Heart left ventricle (tissue), 16 donors: ENCODE measurements at regions of chr11 and their contacts with region 1.

Region 1: DNA sequence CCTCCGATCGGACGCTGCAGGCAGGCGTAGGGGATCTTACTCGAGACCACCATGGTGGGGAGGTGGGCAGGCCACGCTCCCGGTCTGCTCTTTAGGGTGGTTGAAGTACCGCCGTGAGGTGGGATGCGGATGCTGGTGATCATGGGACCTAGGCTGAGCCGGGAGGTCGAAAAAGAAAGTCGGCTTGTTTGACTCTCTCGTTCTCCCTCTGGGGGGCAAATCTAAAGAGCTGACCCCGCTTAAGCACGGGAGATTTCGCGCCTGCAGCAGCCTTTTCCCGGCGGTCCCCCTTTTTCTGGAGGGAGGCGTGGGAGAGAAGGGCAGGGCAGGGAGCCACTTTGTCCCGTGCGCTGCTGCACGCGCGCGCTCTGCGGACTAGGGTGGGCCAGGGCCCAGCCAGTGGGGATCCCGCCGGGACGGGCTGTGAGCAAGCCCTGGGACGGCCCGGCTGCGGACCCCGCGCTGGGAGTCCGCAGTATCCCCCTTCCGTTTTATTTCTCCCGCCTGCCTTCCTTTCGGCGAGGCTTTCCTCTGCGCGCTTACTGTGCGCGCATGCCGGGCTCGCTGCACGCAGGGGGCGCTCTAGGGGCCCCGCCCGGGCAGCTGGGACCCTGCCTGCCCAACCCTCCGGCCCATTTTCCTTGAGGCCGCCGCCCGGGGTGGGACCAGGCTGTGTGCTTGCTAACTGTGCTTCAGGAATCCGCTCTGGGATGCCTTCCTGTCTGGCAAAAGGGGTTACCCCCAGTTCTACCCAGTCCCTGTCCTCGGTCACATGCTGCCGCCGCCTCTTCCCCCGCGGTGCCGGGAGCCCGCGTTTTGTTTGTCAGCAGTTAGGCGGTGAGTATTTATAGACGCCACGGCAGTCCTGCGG is 81.0 kb downstream of the PRR5L start:
- DNase-seq: peak; percentile 51 to 81 (median 64)
- ATAC-seq: peak; percentile 45 to 90 (median 86)
- H3K4me3 ChIP-seq: peak overlapping the region; percentile 52 to 86 (median 72)
- H3K27ac ChIP-seq: peak overlapping the region in 10 of 12 donors; percentile 10 to 92 (median 42)
- H3K4me1 ChIP-seq: peaks cover 0 to 36% (median 11%) of the 10 kb centered on the region in 12 donors
- H3K27me3 ChIP-seq: peaks cover 0 to 10% (median 4%) of the 10 kb centered on the region in 9 donors
- CTCF ChIP-seq: peak; percentile 42 to 76 (median 64)
- POLR2A ChIP-seq: no peak

Region 2: DNA sequence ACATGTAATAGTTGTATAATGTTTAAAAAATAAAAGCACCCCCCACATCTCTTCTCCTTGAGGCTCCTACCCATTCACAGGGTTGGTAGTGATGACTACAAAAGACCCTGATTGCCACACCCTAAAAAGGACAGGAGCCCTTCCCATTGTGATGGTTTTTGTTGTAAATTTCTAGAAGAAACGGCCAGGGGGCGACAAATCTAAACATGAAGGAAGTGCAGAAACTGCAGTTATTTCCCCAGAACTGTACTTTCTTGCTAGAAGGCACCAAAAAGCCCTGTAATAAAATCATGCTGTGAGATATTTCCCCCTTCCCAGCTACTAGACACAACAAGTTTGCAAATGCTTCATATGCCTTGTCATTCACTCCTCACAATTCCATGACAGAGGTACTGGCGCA is 70.2 kb before region 1 on chr11:
- intact Hi-C with region 1: loop called in 1 of 10 experiments (anchors 10 kb)
- DNase-seq: no peak
- ATAC-seq: no peak
- H3K4me3 ChIP-seq: no peak overlapping the region
- H3K27ac ChIP-seq: no peak overlapping the region
- H3K4me1 ChIP-seq: peaks cover 0 to 20% (median 0%) of the 10 kb centered on the region in 12 donors
- H3K27me3 ChIP-seq: no peaks in the 10 kb centered on the region
- CTCF ChIP-seq: peak in 8 of 12 donors; percentile 10 to 46 (median 32)
- POLR2A ChIP-seq: no peak

Region 3: DNA sequence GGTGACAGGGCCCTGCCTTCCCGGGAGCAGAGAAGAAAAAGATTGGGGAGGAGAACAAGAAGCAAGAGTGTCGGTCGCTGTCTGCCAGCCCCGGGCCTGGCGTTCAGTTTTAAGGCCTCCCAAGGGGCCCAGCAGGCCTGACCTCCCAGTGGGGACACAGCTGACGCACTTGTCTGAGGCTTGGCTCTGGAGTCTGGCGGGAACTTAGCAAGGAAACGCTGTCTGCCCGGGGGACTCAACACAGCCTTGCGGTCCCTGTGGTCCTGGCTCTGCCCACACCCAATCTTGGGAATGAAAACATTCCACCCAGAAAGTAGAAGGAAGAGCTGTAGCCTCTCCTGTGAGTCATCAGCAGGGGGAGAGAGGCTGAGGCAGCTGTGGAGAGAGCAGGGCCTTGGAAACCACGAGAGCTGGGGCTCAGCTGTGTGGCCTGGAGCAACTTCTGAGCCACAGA is 78.6 kb after region 1 on chr11:
- intact Hi-C with region 1: loop called in 2 of 10 experiments (anchors 5 to 10 kb)
- DNase-seq: peak; percentile 85 to 92 (median 90)
- ATAC-seq: peak; percentile 87 to 93 (median 92)
- H3K4me3 ChIP-seq: no peak overlapping the region
- H3K27ac ChIP-seq: peak overlapping the region; percentile 72 to 93 (median 84)
- H3K4me1 ChIP-seq: peaks cover 0 to 57% (median 35%) of the 10 kb centered on the region in 12 donors
- H3K27me3 ChIP-seq: no peaks in the 10 kb centered on the region
- CTCF ChIP-seq: peak in 3 of 12 donors; percentile 16 to 30 (median 21)
- POLR2A ChIP-seq: no peak

Region 4: GRCh38 chr11:36469881-36470802 is 93.0 kb after region 1 on chr11:
- intact Hi-C with region 1: loop called in 6 of 10 experiments (anchors 5 to 10 kb)
- DNase-seq: no peak
- ATAC-seq: peak in 2 of 4 donors; percentile 60 to 78
- H3K4me3 ChIP-seq: no peak overlapping the region
- H3K27ac ChIP-seq: peak overlapping the region in 3 of 12 donors; percentile 2 to 35 (median 26)
- H3K4me1 ChIP-seq: peaks cover 0 to 20% (median 13%) of the 10 kb centered on the region in 12 donors
- H3K27me3 ChIP-seq: no peaks in the 10 kb centered on the region
- CTCF ChIP-seq: no peak
- POLR2A ChIP-seq: no peak

Region 5: GRCh38 chr11:36478700-36479329 is 101.7 kb after region 1 on chr11:
- intact Hi-C with region 1: loop called in 6 of 10 experiments (anchors 5 to 10 kb)
- DNase-seq: peak in 1 of 5 donors; percentile 30
- ATAC-seq: peak in 3 of 4 donors; percentile 70 to 80 (median 78)
- H3K4me3 ChIP-seq: no peak overlapping the region
- H3K27ac ChIP-seq: no peak overlapping the region
- H3K4me1 ChIP-seq: peaks cover 0 to 17% (median 5%) of the 10 kb centered on the region in 12 donors
- H3K27me3 ChIP-seq: no peaks in the 10 kb centered on the region
- CTCF ChIP-seq: peak; percentile 25 to 77 (median 62)
- POLR2A ChIP-seq: no peak